Activated naive CD4-positive, alpha-beta T cell treated with anti-CD3 and anti-CD28 coated beads for 36 hours (primary cell): ENCODE measurements at regions of chr18 and their contacts with region 1.

Region 1: GRCh38 chr18:24913507-24914170 is 438.3 kb downstream of the ZNF521 start:
- DNase-seq: no peak
- H3K4me3 Mint-ChIP-seq: no peak overlapping the region
- H3K27ac Mint-ChIP-seq: no peak overlapping the region
- H3K4me1 Mint-ChIP-seq: no peaks in the 10 kb centered on the region
- H3K27me3 Mint-ChIP-seq: peaks cover 3% of the 10 kb centered on the region

Region 2: DNA sequence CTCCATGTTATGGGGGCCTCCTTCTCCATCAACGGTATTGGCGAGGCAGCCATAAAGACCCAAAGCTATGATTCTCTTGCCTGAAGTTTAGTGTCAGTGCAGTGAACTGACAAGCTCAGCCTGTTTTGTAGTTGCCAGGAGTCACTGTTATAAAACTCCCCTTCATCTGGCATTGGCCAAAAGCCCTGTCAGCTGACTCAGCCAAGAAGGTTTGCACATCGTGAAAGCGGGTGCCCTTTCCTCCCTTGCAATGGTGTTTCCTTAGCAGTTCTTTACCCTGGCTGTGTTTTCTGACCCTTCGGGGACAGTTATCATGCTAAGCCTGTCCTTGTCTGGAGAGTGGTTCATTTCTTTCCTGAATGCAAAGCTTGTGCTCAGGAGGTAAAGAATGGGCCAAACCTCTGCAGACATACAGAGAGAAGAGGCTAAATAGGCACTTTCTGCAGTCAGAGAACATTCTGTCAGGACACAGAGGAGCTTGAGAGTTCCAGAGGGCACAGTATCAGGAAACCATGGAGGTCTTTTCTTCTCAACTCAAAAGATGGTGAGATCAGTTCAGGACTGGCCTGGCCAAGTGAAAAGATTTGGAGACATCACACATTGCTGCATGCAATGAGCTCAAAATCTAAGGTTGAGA is 24.1 kb after region 1 on chr18:
- CTCF ChIA-PET with region 1: no interaction called
- intact Hi-C with region 1: no loop called
- DNase-seq: no peak
- H3K4me3 Mint-ChIP-seq: no peak overlapping the region
- H3K27ac Mint-ChIP-seq: no peak overlapping the region
- H3K4me1 Mint-ChIP-seq: no peaks in the 10 kb centered on the region
- H3K27me3 Mint-ChIP-seq: no peaks in the 10 kb centered on the region

Region 3: GRCh38 chr18:24974431-24974830 is 60.8 kb after region 1 on chr18:
- CTCF ChIA-PET with region 1: no interaction called
- intact Hi-C with region 1: loop called (anchors 10 kb)
- DNase-seq: no peak
- H3K4me3 Mint-ChIP-seq: no peak overlapping the region
- H3K27ac Mint-ChIP-seq: no peak overlapping the region
- H3K4me1 Mint-ChIP-seq: no peaks in the 10 kb centered on the region
- H3K27me3 Mint-ChIP-seq: peaks cover 2% of the 10 kb centered on the region